ENCODE measurements at regions of chr9 and their contacts with region 1.

Region 1: DNA sequence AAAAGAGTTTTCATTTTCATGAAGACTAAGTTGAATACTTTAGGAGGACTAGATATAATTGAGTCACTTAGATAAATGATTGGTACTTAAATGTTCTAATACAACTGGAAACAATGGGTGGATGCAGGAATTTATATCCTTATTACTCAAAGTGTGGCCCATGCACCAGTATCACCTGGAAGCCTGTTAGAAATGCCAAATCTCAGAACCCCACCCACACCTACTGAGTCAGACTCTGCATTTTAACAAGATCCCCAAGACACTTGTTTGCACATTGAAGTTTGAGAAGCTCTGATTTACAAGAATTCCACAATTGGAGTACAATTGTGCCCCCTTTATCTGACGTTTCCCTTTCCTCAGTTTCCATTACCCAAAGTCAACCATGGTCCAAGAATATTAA is 239.0 kb downstream of the AUH start:
- DNase-seq: no peak
- H3K4me3 ChIP-seq: no peak overlapping the region
- H3K27ac ChIP-seq: no peak overlapping the region
- H3K4me1 ChIP-seq: no peaks in the 10 kb centered on the region
- H3K27me3 ChIP-seq: no peaks in the 10 kb centered on the region
- CTCF ChIP-seq: no peak
- POLR2A ChIP-seq: no peak

Region 2: DNA sequence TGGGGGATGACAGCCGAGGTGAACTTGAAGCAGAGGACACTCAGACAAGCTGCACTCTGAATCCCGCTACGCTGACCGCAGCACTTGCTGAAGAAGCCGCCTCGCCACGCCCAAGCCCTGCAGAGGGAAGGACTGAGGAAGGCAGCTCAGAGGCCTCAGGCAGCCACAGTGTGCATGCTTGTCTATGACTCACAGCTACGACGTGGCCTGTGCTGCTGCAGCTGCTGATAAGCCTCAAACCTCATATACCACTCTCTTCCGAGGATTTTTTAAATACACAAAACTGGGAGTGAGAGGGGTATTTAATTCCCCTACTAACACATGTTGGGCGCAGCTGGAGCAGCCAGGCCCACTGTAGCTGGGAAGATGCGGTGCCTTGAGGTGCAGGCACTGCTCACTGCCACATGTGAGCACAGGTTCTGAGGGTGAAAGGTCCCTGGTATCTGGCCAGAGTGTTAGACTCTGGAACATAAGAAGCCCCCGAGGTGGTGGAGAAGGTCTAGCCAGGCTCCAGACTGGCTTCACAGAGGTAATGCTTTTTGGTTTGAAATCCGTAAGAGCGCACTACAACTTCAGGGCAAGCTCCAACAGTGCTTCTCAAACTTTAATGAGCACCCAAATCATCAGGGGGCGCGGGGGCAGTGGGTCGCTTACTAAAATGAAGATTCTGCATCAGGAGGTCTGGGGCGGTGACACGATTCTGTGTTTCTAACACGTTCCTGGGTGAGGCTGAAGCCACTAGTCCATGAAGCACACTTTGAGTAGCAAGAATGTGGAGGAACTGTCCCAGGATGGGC is 42.2 kb after region 1 on chr9:
- intact Hi-C with region 1: loop called (anchors 1 kb)
- DNase-seq: peak; percentile 26 to 61
- H3K4me3 ChIP-seq: no peak overlapping the region
- H3K27ac ChIP-seq: no peak overlapping the region
- H3K4me1 ChIP-seq: no peaks in the 10 kb centered on the region
- H3K27me3 ChIP-seq: no peaks in the 10 kb centered on the region
- CTCF ChIP-seq: no peak
- POLR2A ChIP-seq: no peak

Region 3: GRCh38 chr9:91186518-91187108 is 63.9 kb after region 1 on chr9:
- intact Hi-C with region 1: no loop called
- DNase-seq: no peak
- H3K4me3 ChIP-seq: no peak overlapping the region
- H3K27ac ChIP-seq: no peak overlapping the region
- H3K4me1 ChIP-seq: no peaks in the 10 kb centered on the region
- H3K27me3 ChIP-seq: no peaks in the 10 kb centered on the region
- CTCF ChIP-seq: no peak
- POLR2A ChIP-seq: no peak

Region 4: DNA sequence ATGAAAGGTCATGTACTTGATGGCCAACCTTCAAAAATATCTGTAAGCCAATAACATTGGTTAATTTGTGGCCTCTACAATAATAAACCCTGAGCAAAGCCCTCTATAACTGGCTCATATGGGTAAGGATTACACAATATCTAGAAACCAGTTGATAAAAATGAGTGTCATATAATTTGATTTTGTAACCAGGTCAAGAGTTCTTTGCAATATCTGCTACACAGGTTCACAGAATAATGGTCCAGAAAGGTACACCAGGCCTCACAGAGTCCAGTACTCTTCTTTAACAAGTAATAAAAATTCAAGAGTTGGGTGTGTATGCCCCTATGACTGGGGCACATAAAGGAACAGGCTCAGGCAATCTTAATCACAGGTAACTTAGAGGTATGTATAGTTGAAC is 143.7 kb after region 1 on chr9:
- intact Hi-C with region 1: no loop called
- DNase-seq: no peak
- H3K4me3 ChIP-seq: no peak overlapping the region
- H3K27ac ChIP-seq: no peak overlapping the region
- H3K4me1 ChIP-seq: no peaks in the 10 kb centered on the region
- H3K27me3 ChIP-seq: no peaks in the 10 kb centered on the region
- CTCF ChIP-seq: no peak
- POLR2A ChIP-seq: no peak